ENCODE measurements at regions of chr18 and their contacts with region 1.

Region 1: GRCh38 chr18:23918401-23919032 is 96.0 kb upstream of the TTC39C start:
- DNase-seq: peak; percentile 76 to 94 (median 84)
- ATAC-seq: peak; percentile 75 to 78
- H3K4me3 ChIP-seq: no peak overlapping the region
- H3K27ac ChIP-seq: no peak overlapping the region
- H3K4me1 ChIP-seq: no peaks in the 10 kb centered on the region
- H3K27me3 ChIP-seq: no peaks in the 10 kb centered on the region

Region 2: DNA sequence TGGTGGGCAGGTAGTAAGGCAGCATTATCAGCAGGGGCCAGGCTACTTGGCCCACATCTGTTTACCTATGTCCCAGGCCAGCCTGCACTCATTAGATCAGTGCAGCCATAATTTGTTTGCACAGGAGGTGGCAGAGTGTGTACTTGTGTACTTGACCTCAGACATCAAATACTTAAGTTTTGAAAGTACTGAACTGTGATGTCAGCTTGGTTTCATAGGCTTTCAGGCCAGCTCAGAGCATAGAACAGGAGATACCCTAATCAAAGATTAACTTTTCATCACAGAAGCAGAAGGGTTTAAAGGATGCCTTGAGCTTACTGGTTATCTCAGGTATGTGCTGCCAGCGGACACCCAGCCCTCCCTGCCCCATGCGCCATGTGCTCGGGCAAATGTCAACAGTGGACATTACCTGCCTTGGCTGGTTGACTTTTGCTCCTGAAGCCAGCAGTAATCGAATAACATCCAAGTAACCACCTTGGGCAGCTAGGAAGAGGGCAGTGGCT is 289.0 kb before region 1 on chr18:
- intact Hi-C with region 1: loop called in 1 of 4 experiments (anchors 10 kb)
- DNase-seq: no peak
- ATAC-seq: no peak
- H3K4me3 ChIP-seq: no peak overlapping the region
- H3K27ac ChIP-seq: no peak overlapping the region
- H3K4me1 ChIP-seq: peaks cover 2% of the 10 kb centered on the region
- H3K27me3 ChIP-seq: no peaks in the 10 kb centered on the region

Region 3: DNA sequence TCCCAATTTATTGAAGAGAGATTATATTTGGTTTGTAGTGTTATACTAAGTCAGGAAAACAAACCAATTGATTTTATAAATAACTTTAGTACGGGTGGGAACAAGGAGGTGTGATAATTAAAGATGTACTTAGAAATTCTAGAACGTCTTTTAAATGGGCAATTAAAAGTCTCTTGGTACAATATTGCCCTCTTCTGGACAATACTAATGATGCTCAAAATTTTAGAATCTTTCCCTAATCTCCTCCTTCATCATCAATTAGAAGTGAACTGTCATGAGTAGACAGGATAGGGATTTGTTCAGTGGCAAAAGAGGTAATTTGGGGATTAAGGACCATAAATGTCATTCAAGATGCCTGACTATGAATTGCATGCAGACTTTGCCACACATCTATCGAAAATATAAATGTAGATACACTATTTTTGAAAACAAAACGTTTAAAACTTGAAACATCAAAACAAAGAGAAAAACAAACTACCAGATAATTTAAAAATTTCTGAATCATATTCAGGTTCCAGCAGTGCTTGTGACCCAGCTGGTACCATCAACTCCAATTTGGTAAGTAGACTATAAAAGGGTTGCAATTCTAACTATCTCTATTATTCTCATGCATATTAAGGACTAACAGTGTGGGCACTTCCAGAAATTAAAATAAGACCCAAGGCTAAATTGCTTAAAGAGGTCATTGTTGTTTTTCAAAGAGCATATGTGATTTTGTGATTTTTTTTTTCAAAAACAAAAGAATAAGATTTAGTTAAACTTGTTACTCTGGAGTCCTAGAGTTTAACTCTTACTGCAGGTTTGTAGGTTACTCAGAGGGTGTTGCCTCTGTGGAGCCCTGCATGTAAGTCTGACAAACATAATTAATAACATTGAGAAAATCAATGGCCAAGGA is 105.7 kb before region 1 on chr18:
- intact Hi-C with region 1: loop called in 2 of 4 experiments (anchors 10 kb)
- DNase-seq: no peak
- ATAC-seq: no peak
- H3K4me3 ChIP-seq: no peak overlapping the region
- H3K27ac ChIP-seq: no peak overlapping the region
- H3K4me1 ChIP-seq: no peaks in the 10 kb centered on the region
- H3K27me3 ChIP-seq: no peaks in the 10 kb centered on the region

Region 4: GRCh38 chr18:23828426-23828825 is 90.1 kb before region 1 on chr18:
- intact Hi-C with region 1: loop called in 1 of 4 experiments (anchors 10 kb)
- DNase-seq: no peak
- ATAC-seq: peak in 1 of 2 donors; percentile 40
- H3K4me3 ChIP-seq: no peak overlapping the region
- H3K27ac ChIP-seq: no peak overlapping the region
- H3K4me1 ChIP-seq: peaks cover 6% of the 10 kb centered on the region
- H3K27me3 ChIP-seq: no peaks in the 10 kb centered on the region